GM18951 (cell line): ENCODE measurements at regions of chr15 and their contacts with region 1.

Region 1: GRCh38 chr15:68154923-68155559 is 50.1 kb downstream of the CALML4 start:
- POLR2A ChIP-seq: no peak

Region 2: DNA sequence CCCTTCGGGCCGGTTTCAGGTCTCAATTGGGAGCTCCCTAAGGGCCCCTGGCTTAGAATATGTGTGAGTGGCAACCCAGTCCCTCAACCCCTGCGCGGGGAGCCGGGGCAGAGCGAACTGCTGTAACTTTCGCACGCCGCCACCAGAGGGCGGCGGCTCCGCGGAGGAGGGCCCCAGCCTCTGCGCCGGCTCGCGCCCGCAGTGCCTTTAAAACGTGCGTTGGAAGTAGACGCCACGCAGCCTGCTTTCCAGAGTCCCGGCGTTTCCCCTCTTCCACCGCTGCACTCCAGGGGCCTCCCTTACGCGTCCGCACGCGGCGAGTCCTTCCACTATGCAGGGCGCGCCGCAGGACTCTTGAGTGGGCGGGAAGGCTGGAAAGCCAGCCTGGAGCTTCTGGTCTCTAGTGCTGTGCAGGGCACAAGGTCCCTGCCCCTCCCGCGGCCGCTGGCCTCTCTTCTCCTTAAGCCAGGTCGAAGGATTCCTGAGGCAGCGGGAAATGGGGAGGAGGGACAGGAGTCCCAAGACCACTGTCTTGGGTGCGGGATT is 291.5 kb before region 1 on chr15:
- in situ Hi-C with region 1: loop called (anchors 25 kb)
- POLR2A ChIP-seq: no peak

Region 3: DNA sequence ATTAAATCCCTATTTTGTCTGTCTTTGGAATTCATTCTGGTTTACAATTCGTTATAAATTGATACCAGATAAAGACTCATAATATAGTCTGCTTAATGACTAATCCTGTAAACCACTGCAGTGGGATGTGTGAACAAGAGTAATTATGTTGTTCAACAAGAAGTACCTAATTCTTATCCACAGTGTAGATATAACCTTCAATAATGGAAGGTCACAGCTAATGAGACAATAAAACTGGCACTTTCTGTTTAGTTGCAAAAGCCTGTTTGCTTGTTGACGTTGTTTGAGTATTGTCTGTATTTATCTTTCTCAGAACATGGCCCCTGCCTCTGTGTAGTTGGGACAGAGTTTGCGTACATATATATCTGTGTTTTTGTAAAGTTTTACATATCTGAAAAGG is 74.3 kb before region 1 on chr15:
- in situ Hi-C with region 1: no loop called
- POLR2A ChIP-seq: no peak